Pancreas (tissue), 10 donors: ENCODE measurements at regions of chr19 and their contacts with region 1.

Region 1: GRCh38 chr19:47765523-47766358 is 12.8 kb upstream of the SELENOW start:
- DNase-seq: peak in 4 of 6 donors; percentile 65 to 87 (median 78)
- ATAC-seq: peak in 3 of 4 donors; percentile 65 to 77 (median 67)
- H3K4me3 ChIP-seq: no peak overlapping the region
- H3K27ac ChIP-seq: no peak overlapping the region
- H3K4me1 ChIP-seq: no peaks in the 10 kb centered on the region
- H3K27me3 ChIP-seq: no peaks in the 10 kb centered on the region
- CTCF ChIP-seq: peak; percentile 33 to 72 (median 66)

Region 2: GRCh38 chr19:47786566-47786965 is 20.8 kb after region 1 on chr19:
- intact Hi-C with region 1: loop called in 1 of 3 experiments (anchors 2 kb)
- DNase-seq: no peak
- ATAC-seq: no peak
- H3K4me3 ChIP-seq: no peak overlapping the region
- H3K27ac ChIP-seq: no peak overlapping the region
- H3K4me1 ChIP-seq: peaks cover 0 to 5% (median 0%) of the 10 kb centered on the region in 3 donors
- H3K27me3 ChIP-seq: no peaks in the 10 kb centered on the region
- CTCF ChIP-seq: no peak